PC-3 (cell line): ENCODE measurements at regions of chr1 and their contacts with region 1.

Region 1: GRCh38 chr1:241640029-241640818 is at the starts of genes CHML and OPN3:
- DNase-seq: peak; percentile 98
- ATAC-seq: peak; percentile 90
- H3K4me3 ChIP-seq: peak within 1 kb of the TSS; percentile 77
- H3K27ac ChIP-seq: peak within 1 kb of the TSS; percentile 56
- H3K4me1 ChIP-seq: peaks cover 47% of the 10 kb centered on the region
- H3K27me3 ChIP-seq: no peaks in the 10 kb centered on the region
- CTCF ChIP-seq: no peak
- total RNA-seq, gene CHML: 54.5 and 68.6 TPM in 2 replicates
- total RNA-seq, gene OPN3: 44.8 and 45.5 TPM in 2 replicates

Region 2: GRCh38 chr1:241605146-241605805 is 34.9 kb before region 1 on chr1:
- CTCF ChIA-PET with region 1: interaction called, 9 read pairs
- POLR2A ChIA-PET with region 1: interaction called, 16 read pairs
- intact Hi-C with region 1: no loop called
- DNase-seq: peak; percentile 98
- ATAC-seq: peak; percentile 34
- H3K4me3 ChIP-seq: no peak overlapping the region
- H3K27ac ChIP-seq: peak overlapping the region; percentile 88
- H3K4me1 ChIP-seq: peaks cover 74% of the 10 kb centered on the region
- H3K27me3 ChIP-seq: no peaks in the 10 kb centered on the region
- CTCF ChIP-seq: peak; percentile 99

Region 3: DNA sequence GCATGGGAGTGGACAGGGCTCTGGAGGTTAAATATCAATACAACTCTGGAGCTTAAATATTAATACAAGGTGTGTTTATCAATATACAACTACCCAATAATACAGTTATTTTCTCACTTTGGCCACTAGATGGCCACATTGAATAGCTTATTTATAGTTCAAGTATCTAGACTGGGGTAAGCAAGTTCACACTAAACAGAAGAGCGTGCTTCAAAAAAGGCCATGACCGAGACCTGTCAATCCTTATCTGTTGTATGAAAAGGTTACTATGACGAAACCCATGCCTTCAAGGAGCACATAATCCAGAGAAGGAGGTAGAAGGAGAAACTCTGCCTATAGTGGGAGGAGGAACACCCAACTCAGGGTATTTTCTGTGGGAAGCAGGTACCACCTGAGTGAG is 29.2 kb before region 1 on chr1:
- CTCF ChIA-PET with region 1: interaction called, 9 read pairs
- POLR2A ChIA-PET with region 1: interaction called, 3 read pairs
- intact Hi-C with region 1: loop called (anchors 1 kb)
- DNase-seq: peak; percentile 96
- ATAC-seq: peak; percentile 7
- H3K4me3 ChIP-seq: no peak overlapping the region
- H3K27ac ChIP-seq: peak overlapping the region; percentile 85
- H3K4me1 ChIP-seq: peaks cover 94% of the 10 kb centered on the region
- H3K27me3 ChIP-seq: no peaks in the 10 kb centered on the region
- CTCF ChIP-seq: peak; percentile 97

Region 4: GRCh38 chr1:241660424-241660972 is 20.3 kb after region 1 on chr1:
- CTCF ChIA-PET with region 1: no interaction called
- POLR2A ChIA-PET with region 1: no interaction called
- intact Hi-C with region 1: no loop called
- DNase-seq: no peak
- ATAC-seq: no peak
- H3K4me3 ChIP-seq: no peak overlapping the region
- H3K27ac ChIP-seq: no peak overlapping the region
- H3K4me1 ChIP-seq: peaks cover 18% of the 10 kb centered on the region
- H3K27me3 ChIP-seq: no peaks in the 10 kb centered on the region
- CTCF ChIP-seq: no peak

Region 5: GRCh38 chr1:241762713-241763339 is 122.6 kb after region 1 on chr1:
- CTCF ChIA-PET with region 1: interaction called, 5 read pairs
- POLR2A ChIA-PET with region 1: no interaction called
- intact Hi-C with region 1: loop called (anchors 2 kb)
- DNase-seq: peak; percentile 87
- ATAC-seq: peak; percentile 93
- H3K4me3 ChIP-seq: no peak overlapping the region
- H3K27ac ChIP-seq: no peak overlapping the region
- H3K4me1 ChIP-seq: peaks cover 13% of the 10 kb centered on the region
- H3K27me3 ChIP-seq: no peaks in the 10 kb centered on the region
- CTCF ChIP-seq: no peak

Region 6: DNA sequence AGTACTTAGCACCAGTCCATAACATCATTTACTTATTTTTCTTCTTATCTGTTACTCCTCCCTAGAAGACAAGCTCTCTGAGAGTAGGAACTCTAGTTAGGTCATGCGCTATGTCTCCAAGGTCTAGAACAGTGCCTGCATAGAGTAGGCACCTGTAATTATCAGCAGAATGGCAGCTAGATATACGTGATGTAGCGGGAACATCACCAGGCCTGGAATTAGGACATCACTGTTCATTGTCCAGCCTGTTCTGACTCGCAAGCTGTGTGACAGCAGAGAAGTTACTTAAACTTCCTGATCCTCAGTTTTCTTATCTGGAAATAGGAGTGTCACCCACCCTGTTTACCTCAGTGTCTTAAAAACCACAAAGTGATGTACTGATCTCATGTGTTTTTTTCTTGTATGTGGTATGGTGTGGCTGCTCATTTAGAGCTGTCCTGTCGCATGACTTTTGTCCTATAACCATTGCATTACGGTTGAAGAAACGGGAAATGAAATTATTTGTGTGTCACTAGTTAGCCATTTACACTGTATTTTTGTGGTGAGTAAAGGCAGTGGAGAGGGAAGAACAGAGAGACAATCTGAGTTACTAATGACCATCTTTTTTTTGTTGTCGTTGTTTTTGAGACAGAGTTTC is 170.7 kb after region 1 on chr1:
- CTCF ChIA-PET with region 1: no interaction called
- POLR2A ChIA-PET with region 1: interaction called, 22 read pairs
- intact Hi-C with region 1: no loop called
- DNase-seq: no peak
- ATAC-seq: no peak
- H3K4me3 ChIP-seq: no peak overlapping the region
- H3K27ac ChIP-seq: no peak overlapping the region
- H3K4me1 ChIP-seq: peaks cover 12% of the 10 kb centered on the region
- H3K27me3 ChIP-seq: no peaks in the 10 kb centered on the region
- CTCF ChIP-seq: no peak

Region 7: GRCh38 chr1:241817261-241817792 is 177.1 kb after region 1 on chr1:
- CTCF ChIA-PET with region 1: interaction called, 12 read pairs
- POLR2A ChIA-PET with region 1: interaction called, 22 read pairs
- intact Hi-C with region 1: no loop called
- DNase-seq: peak; percentile 91
- ATAC-seq: peak; percentile 93
- H3K4me3 ChIP-seq: no peak overlapping the region
- H3K27ac ChIP-seq: peak overlapping the region; percentile 57
- H3K4me1 ChIP-seq: peaks cover 34% of the 10 kb centered on the region
- H3K27me3 ChIP-seq: no peaks in the 10 kb centered on the region
- CTCF ChIP-seq: no peak

Region 8: GRCh38 chr1:241888232-241888631 is 248.0 kb after region 1 on chr1:
- CTCF ChIA-PET with region 1: no interaction called
- POLR2A ChIA-PET with region 1: no interaction called
- intact Hi-C with region 1: no loop called
- DNase-seq: peak; percentile 35
- ATAC-seq: peak; percentile 82
- H3K4me3 ChIP-seq: no peak overlapping the region
- H3K27ac ChIP-seq: no peak overlapping the region
- H3K4me1 ChIP-seq: no peaks in the 10 kb centered on the region
- H3K27me3 ChIP-seq: no peaks in the 10 kb centered on the region
- CTCF ChIP-seq: no peak